Activated naive CD4-positive, alpha-beta T cell treated with anti-CD3 and anti-CD28 coated beads, Interleukin-2, amount 10 ng/mL, durations not matched to agents 7 days and 5 days (primary cell): ENCODE measurements at regions of chr3 and their contacts with region 1.

Region 1: GRCh38 chr3:160941885-160942494 is 163.2 kb downstream of the B3GALNT1 start:
- DNase-seq: peak; percentile 79
- H3K4me3 Mint-ChIP-seq: no peak overlapping the region
- H3K27ac Mint-ChIP-seq: no peak overlapping the region
- H3K4me1 Mint-ChIP-seq: no peaks in the 10 kb centered on the region
- H3K27me3 Mint-ChIP-seq: no peaks in the 10 kb centered on the region

Region 2: DNA sequence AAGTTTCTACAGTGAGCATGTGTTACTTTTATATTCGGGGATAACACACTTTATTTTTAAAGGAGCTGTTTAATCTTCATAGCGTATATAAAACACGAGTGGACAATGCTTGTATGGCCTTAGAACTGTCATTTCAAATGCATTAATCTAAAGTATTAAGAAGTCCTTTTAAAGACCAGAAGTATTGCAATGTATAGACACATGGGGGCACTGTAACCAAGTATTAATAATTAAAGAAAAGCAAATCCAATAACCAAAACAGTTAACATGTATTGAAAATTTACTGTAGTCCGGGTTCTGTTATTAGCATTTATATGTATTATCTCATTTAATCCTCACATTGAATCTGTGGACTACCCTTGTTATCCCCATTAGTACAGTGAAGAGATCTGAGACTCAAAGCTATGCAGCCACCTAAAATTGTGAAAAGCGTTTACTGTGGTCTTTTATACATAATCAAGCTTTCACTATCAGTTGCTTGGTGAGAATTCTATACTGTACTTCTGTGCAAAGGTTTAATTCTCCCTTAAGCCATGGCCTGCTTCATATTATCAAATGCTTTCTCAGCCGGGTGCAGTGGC is 254.9 kb before region 1 on chr3:
- CTCF ChIA-PET with region 1: interaction called, 11 read pairs
- DNase-seq: no peak
- H3K4me3 Mint-ChIP-seq: no peak overlapping the region
- H3K27ac Mint-ChIP-seq: no peak overlapping the region
- H3K4me1 Mint-ChIP-seq: no peaks in the 10 kb centered on the region
- H3K27me3 Mint-ChIP-seq: no peaks in the 10 kb centered on the region

Region 3: GRCh38 chr3:160707187-160707794 is 234.7 kb before region 1 on chr3:
- CTCF ChIA-PET with region 1: interaction called, 15 read pairs
- DNase-seq: peak; percentile 55
- H3K4me3 Mint-ChIP-seq: no peak overlapping the region
- H3K27ac Mint-ChIP-seq: no peak overlapping the region
- H3K4me1 Mint-ChIP-seq: no peaks in the 10 kb centered on the region
- H3K27me3 Mint-ChIP-seq: peaks cover 36% of the 10 kb centered on the region

Region 4: GRCh38 chr3:160956806-160957205 is 14.8 kb after region 1 on chr3:
- CTCF ChIA-PET with region 1: interaction called, 15 read pairs
- DNase-seq: no peak
- H3K4me3 Mint-ChIP-seq: no peak overlapping the region
- H3K27ac Mint-ChIP-seq: no peak overlapping the region
- H3K4me1 Mint-ChIP-seq: no peaks in the 10 kb centered on the region
- H3K27me3 Mint-ChIP-seq: peaks cover 3% of the 10 kb centered on the region